Esophagus muscularis mucosa (tissue), 4 donors: ENCODE measurements at regions of chr15 and their contacts with region 1.

Region 1: DNA sequence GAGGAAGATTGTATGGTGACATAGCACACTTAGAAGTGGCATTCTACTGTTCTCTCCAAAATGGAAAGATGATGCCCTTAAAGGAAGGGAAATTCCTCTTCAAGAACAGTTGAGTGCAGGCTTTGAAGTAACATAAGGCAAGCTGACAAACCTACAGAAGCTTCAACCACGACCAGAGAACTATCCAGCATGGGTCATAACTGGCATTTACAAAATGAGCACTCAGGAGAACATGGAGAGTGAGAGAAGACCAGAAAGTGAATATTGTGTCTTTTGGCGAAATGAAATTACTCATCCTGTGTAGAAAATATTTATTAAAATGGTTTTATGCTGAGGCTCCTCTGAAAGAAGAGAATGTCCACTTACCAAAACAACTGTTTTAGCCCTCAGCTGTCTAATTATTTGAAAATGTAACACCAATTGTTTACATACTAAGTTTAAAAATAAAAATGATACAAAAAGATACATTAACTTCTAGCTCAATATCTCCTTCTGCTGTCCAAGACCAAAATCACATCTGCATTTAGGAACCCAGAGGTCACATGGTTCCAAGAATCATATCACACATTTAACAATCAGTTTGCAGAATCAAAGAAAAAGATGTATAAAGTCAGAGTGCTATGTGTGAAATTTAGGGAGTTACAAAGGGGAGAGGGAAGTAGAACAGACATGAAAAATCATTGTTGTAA is 216.9 kb downstream of the ATP8B4 start:
- DNase-seq: no peak
- H3K4me3 ChIP-seq: peak overlapping the region in 3 of 4 donors; percentile 0 to 17 (median 0)
- H3K27ac ChIP-seq: peak overlapping the region; percentile 67 to 78 (median 70)
- H3K4me1 ChIP-seq: peaks cover 17 to 58% (median 49%) of the 10 kb centered on the region in 4 donors
- H3K27me3 ChIP-seq: no peaks in the 10 kb centered on the region
- CTCF ChIP-seq: peak in 1 of 3 experiments; percentile 29
- EP300 ChIP-seq: no peak
- POLR2A ChIP-seq: no peak

Region 2: DNA sequence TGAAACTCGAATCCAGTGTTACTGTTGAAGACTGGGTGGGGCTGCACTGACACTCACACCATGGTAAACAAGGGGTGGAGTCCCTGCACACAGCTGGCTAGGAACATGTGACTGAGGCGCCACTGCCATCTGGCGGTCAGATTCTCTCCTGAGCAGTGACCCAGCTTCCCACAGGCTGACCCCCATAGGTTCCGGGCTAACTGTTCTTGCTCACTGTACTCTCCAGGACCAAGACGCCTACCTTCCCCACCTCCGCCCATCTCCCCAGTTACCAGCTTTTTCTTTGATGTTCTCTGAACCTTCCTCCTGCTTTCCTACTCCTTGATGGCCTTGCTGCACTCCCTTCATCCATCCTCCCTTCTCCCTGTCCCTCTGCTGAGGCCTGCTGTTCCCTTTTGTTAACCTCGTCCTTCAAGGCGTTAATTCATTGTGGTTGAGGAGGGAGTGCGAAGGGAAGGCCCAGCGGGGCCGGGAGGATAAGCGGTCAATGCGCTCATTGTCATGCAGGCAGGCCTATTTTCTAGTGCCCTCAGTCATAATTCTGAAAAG is 101.7 kb after region 1 on chr15:
- intact Hi-C with region 1: loop called (anchors 10 kb)
- DNase-seq: peak; percentile 93
- H3K4me3 ChIP-seq: no peak overlapping the region
- H3K27ac ChIP-seq: peak overlapping the region in 3 of 4 donors; percentile 33 to 43 (median 43)
- H3K4me1 ChIP-seq: peaks cover 0 to 21% (median 17%) of the 10 kb centered on the region in 4 donors
- H3K27me3 ChIP-seq: no peaks in the 10 kb centered on the region
- CTCF ChIP-seq: peak; percentile 59 to 67 (median 63)
- EP300 ChIP-seq: no peak
- POLR2A ChIP-seq: no peak

Region 3: DNA sequence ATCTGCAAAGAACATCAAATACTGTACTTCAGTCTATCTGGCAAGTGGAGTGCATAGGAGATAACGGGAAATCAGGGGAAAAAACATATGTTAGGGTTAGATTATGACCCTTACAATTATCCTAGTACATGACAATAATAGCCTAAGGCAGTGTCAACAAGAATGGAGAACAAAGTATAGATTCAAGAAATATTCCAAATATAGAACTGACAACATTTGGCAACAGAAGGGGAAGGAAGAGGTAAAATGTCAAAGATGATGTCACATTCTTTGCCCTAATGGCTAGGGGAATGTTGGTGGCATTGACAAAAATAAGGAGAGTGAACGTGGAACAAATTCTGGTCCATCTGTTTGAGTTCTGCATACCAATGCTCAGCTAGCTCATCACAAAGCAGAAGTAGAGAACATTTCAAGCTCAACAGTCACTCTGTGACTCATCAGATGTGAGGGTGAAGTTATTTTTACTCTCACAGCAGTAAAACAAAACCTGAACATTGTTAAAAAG is 232.4 kb after region 1 on chr15:
- intact Hi-C with region 1: loop called (anchors 10 kb)
- DNase-seq: no peak
- H3K4me3 ChIP-seq: no peak overlapping the region
- H3K27ac ChIP-seq: peak overlapping the region in 3 of 4 donors; percentile 67 to 83 (median 71)
- H3K4me1 ChIP-seq: peaks cover 0 to 27% (median 19%) of the 10 kb centered on the region in 4 donors
- H3K27me3 ChIP-seq: no peaks in the 10 kb centered on the region
- CTCF ChIP-seq: no peak
- EP300 ChIP-seq: no peak
- POLR2A ChIP-seq: no peak

Region 4: GRCh38 chr15:50315814-50316630 is 413.9 kb after region 1 on chr15:
- intact Hi-C with region 1: no loop called
- DNase-seq: no peak
- H3K4me3 ChIP-seq: no peak overlapping the region
- H3K27ac ChIP-seq: no peak overlapping the region
- H3K4me1 ChIP-seq: no peaks in the 10 kb centered on the region
- H3K27me3 ChIP-seq: no peaks in the 10 kb centered on the region
- CTCF ChIP-seq: peak; percentile 29 to 67 (median 62)
- EP300 ChIP-seq: no peak
- POLR2A ChIP-seq: no peak